Activated T-helper 1 cell treated with anti-CD3 and anti-CD28 coated beads, Interleukin-12 subunit alpha, Interleukin-12 subunit beta, Interleukin-2, Interleukin-4 antibody, amounts not matched to agents 30 ng/mL and 10 ng/mL and 1 ng/mL, durations not matched to agents 14 hours and 24 hours and 36 hours (primary cell): ENCODE measurements at regions of chr17 and their contacts with region 1.

Region 1: GRCh38 chr17:49707608-49708514 is at the start of gene SLC35B1:
- DNase-seq: peak; percentile 97
- H3K4me3 Mint-ChIP-seq: peak within 1 kb of the TSS; percentile 98
- H3K27ac Mint-ChIP-seq: peak within 1 kb of the TSS; percentile 97
- H3K4me1 Mint-ChIP-seq: peaks cover 40% of the 10 kb centered on the region
- H3K27me3 Mint-ChIP-seq: peaks cover 1% of the 10 kb centered on the region
- total RNA-seq, gene SLC35B1: 71.6 and 75.4 TPM in 2 replicates

Region 2: GRCh38 chr17:49414622-49415350 is 293.1 kb before region 1 on chr17 and contains the start of gene PHB1:
- intact Hi-C with region 1: loop called (anchors 2 kb)
- DNase-seq: peak; percentile 93
- H3K4me3 Mint-ChIP-seq: peak within 1 kb of the TSS; percentile 98
- H3K27ac Mint-ChIP-seq: peak within 1 kb of the TSS; percentile 95
- H3K4me1 Mint-ChIP-seq: peaks cover 9% of the 10 kb centered on the region
- H3K27me3 Mint-ChIP-seq: peaks cover 3% of the 10 kb centered on the region
- total RNA-seq, gene PHB1: 395 and 401 TPM in 2 replicates

Region 3: DNA sequence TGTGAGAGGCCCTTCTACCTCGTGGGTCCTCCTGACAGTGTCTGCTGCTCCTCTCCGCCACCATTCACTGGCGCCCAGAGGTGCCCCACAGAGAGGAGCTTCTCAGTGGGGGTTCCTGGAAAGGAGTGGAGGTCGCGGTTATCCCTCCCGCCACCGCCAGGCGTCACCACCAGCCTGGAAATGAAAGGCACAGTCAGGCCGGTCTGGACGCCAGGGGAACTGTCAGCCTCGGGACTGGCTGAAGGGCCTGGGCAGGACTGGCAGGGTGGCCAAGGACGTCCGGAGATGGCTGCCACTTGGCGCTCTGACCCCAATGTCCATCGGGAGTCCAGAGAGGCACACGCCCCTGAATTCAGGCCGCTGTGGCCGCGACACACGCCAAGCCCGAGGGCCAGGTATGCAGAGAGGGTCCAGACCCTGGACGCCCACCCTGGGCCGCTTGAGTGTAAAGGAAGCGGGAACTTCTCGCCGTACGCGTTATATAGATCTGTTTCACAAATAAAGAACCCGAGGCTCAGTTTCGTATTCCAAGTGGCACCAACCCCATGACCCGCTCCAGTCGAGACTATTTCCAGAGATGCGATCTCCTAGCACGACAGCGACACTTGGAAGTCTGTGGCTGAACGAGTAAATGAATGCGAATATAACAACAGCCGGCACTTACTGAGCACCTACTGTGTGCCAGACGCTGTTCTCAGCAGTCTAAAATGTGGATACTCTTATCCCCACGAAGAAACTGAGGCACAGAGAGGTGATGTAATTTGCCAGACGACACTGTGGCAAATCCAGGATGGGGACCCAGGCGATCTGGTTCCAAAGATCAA is 139.8 kb before region 1 on chr17:
- intact Hi-C with region 1: loop called (anchors 1 kb)
- DNase-seq: peak; percentile 74
- H3K4me3 Mint-ChIP-seq: peak overlapping the region; percentile 55
- H3K27ac Mint-ChIP-seq: no peak overlapping the region
- H3K4me1 Mint-ChIP-seq: peaks cover 39% of the 10 kb centered on the region
- H3K27me3 Mint-ChIP-seq: peaks cover 36% of the 10 kb centered on the region

Region 4: GRCh38 chr17:49694847-49695683 is 12.8 kb before region 1 on chr17:
- intact Hi-C with region 1: loop called (anchors 1 kb)
- DNase-seq: peak; percentile 57
- H3K4me3 Mint-ChIP-seq: no peak overlapping the region
- H3K27ac Mint-ChIP-seq: peak overlapping the region; percentile 90
- H3K4me1 Mint-ChIP-seq: peaks cover 22% of the 10 kb centered on the region
- H3K27me3 Mint-ChIP-seq: no peaks in the 10 kb centered on the region

Region 5: DNA sequence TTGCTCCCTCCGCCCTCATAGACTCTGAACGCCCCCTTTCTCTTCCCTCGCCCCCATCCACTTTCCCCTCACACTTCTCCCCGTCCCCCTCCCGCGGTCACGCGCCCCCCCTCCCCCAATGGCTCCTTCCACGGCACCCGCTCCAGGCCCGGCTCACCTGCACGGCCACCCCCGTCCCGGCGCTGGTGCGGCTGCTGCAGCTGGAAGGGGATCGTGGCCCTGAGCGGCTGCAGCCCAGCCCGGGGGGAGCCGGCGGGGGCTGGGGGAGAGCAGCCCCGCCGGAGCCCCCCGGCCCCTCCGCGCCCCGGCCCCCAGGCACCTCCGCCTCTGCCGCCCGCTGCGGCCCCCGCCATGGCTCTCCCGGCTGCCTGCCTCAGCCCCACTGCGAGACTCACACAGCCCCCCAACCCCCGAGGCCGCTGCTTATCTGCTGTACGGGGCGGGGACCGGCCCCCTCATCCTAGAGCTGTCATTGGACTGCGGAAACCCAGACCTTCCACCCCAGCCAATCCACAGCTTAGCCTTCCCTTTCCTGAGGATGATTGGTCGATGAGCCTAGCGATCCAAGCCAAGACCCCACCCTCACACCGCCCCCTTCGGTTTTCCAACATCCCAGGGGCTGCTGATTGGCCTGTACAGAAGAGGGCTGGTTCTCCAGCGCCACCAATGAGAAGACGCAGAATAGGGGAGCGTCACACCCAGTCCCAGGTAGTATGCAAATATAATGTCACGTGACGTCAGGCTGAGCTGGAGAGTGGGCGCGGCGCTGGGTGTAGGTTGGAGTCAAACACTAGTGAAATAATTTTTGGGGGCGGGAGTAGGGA is 56.1 kb after region 1 on chr17 and contains the start of gene FAM117A:
- intact Hi-C with region 1: loop called (anchors 1 kb)
- DNase-seq: peak; percentile 95
- H3K4me3 Mint-ChIP-seq: peak within 1 kb of the TSS; percentile 96
- H3K27ac Mint-ChIP-seq: peak within 1 kb of the TSS; percentile 90
- H3K4me1 Mint-ChIP-seq: peaks cover 54% of the 10 kb centered on the region
- H3K27me3 Mint-ChIP-seq: peaks cover 25% of the 10 kb centered on the region
- total RNA-seq, gene FAM117A: 13.9 and 14.8 TPM in 2 replicates

Region 6: GRCh38 chr17:49779739-49780231 is 71.9 kb after region 1 on chr17:
- intact Hi-C with region 1: no loop called
- DNase-seq: no peak
- H3K4me3 Mint-ChIP-seq: no peak overlapping the region
- H3K27ac Mint-ChIP-seq: no peak overlapping the region
- H3K4me1 Mint-ChIP-seq: peaks cover 11% of the 10 kb centered on the region
- H3K27me3 Mint-ChIP-seq: peaks cover 5% of the 10 kb centered on the region

Region 7: GRCh38 chr17:49997791-49998703 is 290.2 kb after region 1 on chr17:
- intact Hi-C with region 1: loop called (anchors 5 kb)
- DNase-seq: peak; percentile 76
- H3K4me3 Mint-ChIP-seq: no peak overlapping the region
- H3K27ac Mint-ChIP-seq: no peak overlapping the region
- H3K4me1 Mint-ChIP-seq: peaks cover 16% of the 10 kb centered on the region
- H3K27me3 Mint-ChIP-seq: peaks cover 60% of the 10 kb centered on the region